PC-9 (cell line): ENCODE measurements at regions of chr7 and their contacts with region 1.

Region 1: DNA sequence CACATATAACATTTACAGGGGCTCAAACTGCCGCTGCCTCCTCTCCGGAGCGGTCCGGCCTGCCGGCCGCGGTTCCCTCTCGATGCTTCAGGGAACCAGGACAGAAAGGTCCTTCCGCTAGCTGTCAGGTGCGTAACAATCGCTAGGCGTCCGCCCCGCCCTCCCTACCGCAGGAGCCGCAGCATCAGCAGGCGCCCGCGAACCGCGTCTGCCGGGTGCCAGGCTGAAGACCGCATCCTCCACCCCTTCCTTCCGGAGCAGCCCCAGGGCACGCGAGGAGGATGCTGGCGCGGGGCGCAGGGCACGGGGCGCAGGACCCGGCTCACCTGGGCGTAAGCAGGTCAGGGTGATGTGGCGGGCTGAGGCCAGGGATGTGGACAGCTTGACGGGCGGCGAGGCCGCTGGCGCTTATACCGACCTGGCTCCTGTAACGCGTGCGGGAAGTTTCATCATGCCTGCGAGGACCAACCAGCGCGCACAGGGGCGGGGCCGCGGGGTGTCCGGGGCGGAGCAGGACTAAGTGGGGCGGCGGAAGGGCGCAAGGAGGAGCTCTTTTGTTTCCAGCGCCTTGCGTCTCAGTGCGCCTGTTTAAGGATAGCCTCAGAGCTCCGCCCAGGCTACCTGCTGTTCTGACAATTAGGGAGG is at the start of gene ASNS:
- DNase-seq: peak; percentile 86 to 97
- H3K4me3 ChIP-seq: peak within 1 kb of the TSS; percentile 85
- H3K27ac ChIP-seq: peak within 1 kb of the TSS; percentile 79
- H3K4me1 ChIP-seq: peaks cover 18% of the 10 kb centered on the region
- H3K27me3 ChIP-seq: no peaks in the 10 kb centered on the region
- CTCF ChIP-seq: no peak
- total RNA-seq, gene ASNS: 173 and 199 TPM in 2 replicates

Region 2: DNA sequence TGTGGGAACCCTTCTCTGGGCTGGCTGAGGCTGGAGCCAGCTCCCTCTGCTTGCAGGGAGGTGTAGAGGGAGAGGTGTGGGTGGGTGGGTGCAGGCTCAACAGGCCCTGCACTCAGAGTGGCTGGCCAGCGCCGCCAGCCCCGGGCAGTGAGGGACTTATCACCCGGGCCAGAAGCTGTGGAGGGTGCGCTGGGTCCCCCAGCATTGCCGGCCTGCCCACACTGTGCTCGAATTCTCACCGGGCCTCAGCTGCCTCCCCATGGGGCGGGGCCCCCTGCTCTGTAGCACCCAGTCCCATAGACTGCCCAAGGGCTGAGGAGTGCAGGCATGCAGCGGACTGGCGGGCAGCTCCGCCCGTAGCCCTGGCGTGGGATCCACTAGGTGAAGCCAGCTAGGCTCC is 331.0 kb before region 1 on chr7:
- CTCF ChIA-PET with region 1: no interaction called
- POLR2A ChIA-PET with region 1: no interaction called
- intact Hi-C with region 1: no loop called
- DNase-seq: no peak
- H3K4me3 ChIP-seq: no peak overlapping the region
- H3K27ac ChIP-seq: no peak overlapping the region
- H3K4me1 ChIP-seq: no peaks in the 10 kb centered on the region
- H3K27me3 ChIP-seq: no peaks in the 10 kb centered on the region
- CTCF ChIP-seq: no peak

Region 3: GRCh38 chr7:97971990-97972943 is 100.1 kb after region 1 on chr7:
- CTCF ChIA-PET with region 1: interaction called, 8 read pairs
- POLR2A ChIA-PET with region 1: no interaction called
- intact Hi-C with region 1: loop called (anchors 5 kb)
- DNase-seq: peak; percentile 74 to 82
- H3K4me3 ChIP-seq: peak overlapping the region; percentile 89
- H3K27ac ChIP-seq: peak overlapping the region; percentile 65
- H3K4me1 ChIP-seq: peaks cover 7% of the 10 kb centered on the region; the same call in 1 of the 2 replicates
- H3K27me3 ChIP-seq: no peaks in the 10 kb centered on the region
- CTCF ChIP-seq: no peak; the same call in 1 of the 2 replicates